ENCODE measurements at regions of chr3 and their contacts with region 1.

Region 1: GRCh38 chr3:146184616-146185015 is 23.6 kb upstream of the PLOD2 start:
- DNase-seq: no peak

Region 2: DNA sequence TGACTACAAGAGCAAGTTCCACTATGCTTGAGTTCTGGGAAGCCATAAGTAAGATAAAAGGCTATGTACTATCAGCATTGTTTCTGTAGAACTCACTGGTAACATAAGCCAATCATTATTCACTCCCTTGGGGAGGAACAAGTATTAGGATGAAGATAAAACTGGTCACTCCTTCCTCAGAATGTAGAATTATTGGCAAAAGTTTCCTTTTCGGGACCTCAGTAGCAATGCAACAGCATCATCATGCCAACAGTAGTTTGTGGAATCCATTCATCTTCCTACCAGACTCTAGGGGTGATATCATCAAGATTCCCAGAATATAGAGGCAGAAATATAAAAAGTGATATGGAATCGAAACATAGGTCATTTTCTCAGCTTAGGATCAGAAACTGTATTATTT is 233.2 kb before region 1 on chr3:
- intact Hi-C with region 1: no loop called
- DNase-seq: no peak

Region 3: DNA sequence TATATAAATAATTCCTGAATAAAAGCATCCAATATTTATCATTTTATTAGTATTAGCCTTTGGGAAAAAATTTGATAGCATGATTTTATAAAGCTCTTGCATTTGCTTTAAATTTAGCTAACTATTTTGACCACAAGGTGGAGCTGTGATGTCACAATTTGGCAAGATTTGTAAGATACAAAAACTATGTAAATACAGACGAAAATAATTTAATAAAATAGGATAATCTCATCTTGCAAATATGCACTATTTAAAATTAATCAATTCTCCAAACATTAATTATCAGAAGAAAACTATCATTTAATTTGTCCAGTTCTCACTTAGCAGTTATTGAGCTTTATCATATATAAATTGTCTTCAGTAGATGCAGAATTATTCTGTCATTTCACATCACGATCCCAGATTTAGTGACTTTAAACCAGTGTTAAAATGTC is 119.0 kb before region 1 on chr3:
- intact Hi-C with region 1: loop called (anchors 5 kb)
- DNase-seq: peak in 17 of 42 donors; percentile 5 to 72 (median 36)

Region 4: GRCh38 chr3:146359841-146360240 is 175.2 kb after region 1 on chr3:
- intact Hi-C with region 1: no loop called
- DNase-seq: no peak

Measured in head of caudate nucleus (tissue), 42 donors.